Caco-2 (cell line): ENCODE measurements at regions of chr6 and their contacts with region 1.

Region 1: DNA sequence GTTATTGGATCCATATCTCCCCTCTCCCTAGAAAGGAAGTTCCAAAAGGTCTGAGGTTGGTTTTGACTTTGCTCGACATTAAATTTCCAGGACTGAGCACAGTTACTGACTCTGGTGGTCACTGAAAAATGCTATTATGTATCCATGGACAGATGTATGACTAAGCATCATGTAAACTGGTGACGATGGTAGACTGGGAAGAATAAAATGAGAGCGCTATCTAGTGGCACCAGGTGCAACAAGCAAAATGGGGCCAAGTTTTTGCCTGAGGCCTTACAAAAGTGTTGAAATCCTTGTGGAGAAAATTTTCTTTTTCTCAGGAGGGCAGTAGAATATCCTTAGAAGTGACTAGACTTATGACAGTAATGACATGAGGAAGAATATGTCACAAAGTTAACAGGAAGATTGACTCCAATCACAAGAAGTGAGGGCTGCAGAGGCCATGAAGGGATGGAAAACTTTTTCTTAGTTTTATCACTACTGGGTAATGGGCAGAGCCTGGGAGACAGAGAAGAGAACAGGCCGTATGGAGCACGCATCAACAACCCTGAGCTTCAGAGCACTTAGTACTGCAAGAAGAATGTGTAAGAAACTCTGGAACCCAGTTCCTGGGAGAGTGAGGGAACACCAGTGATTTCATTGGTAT is 88.9 kb upstream of the ELOVL5 start:
- DNase-seq: peak; percentile 43 to 64
- H3K4me3 ChIP-seq: no peak overlapping the region
- H3K4me3 Mint-ChIP-seq: no peak overlapping the region
- H3K27ac Mint-ChIP-seq: peak overlapping the region; percentile 30
- H3K4me1 ChIP-seq: 0 out of 2 replicates have a peak, but pooled peaks cover 10% of the 10 kb centered on the region
- H3K4me1 Mint-ChIP-seq: no peaks in the 10 kb centered on the region
- H3K27me3 ChIP-seq: no peaks in the 10 kb centered on the region
- H3K27me3 Mint-ChIP-seq: peaks cover 5% of the 10 kb centered on the region
- CTCF ChIP-seq: peak; percentile 30 to 68

Region 2: DNA sequence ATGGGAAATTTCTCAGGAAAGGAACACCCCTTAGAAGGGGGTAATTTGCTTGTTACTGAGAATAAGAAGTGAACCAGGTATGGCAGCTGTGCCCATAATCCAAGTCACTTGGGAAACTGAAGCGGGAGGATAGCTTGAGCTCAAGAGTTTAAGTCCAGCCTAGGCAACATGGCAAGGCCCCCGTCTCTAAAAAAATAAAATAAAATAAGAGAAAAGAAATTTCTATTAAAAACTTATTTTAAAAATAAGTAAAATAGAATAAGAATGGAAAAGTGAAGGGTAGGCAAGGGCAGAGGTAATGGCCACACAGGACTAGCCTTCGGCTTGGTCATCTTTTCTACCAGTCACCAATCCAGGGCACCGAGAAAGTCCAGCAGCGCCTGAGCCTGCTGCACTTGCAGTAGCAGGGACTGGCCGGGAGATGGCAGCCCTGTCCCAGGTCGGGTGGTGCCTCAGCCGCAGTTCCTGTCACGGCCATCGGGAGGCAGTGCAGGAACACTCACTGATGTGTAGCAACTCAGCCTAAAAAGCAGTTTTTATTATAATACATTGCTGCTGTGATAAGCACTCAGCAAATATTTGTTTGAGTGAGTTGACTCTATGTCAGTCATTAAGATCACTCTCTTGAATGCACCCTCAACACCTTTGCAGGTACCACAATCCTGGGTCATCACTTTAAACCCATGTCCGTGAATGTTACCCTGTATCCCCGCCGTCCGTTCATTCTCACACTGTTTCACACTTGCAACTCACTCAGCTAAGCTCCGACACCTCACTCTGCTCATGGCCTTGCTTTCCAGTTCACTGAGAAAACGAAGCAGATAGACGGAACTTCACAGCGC is 265.9 kb before region 1 on chr6:
- CTCF ChIA-PET with region 1: no interaction called
- POLR2A ChIA-PET with region 1: no interaction called
- intact Hi-C with region 1: loop called (anchors 1 kb)
- DNase-seq: peak; percentile 77 to 90
- H3K4me3 ChIP-seq: no peak overlapping the region
- H3K4me3 Mint-ChIP-seq: no peak overlapping the region
- H3K27ac Mint-ChIP-seq: no peak overlapping the region
- H3K4me1 ChIP-seq: peaks cover 6% of the 10 kb centered on the region; the same call in 1 of the 2 replicates
- H3K4me1 Mint-ChIP-seq: no peaks in the 10 kb centered on the region
- H3K27me3 ChIP-seq: no peaks in the 10 kb centered on the region
- H3K27me3 Mint-ChIP-seq: no peaks in the 10 kb centered on the region
- CTCF ChIP-seq: peak; percentile 100

Region 3: DNA sequence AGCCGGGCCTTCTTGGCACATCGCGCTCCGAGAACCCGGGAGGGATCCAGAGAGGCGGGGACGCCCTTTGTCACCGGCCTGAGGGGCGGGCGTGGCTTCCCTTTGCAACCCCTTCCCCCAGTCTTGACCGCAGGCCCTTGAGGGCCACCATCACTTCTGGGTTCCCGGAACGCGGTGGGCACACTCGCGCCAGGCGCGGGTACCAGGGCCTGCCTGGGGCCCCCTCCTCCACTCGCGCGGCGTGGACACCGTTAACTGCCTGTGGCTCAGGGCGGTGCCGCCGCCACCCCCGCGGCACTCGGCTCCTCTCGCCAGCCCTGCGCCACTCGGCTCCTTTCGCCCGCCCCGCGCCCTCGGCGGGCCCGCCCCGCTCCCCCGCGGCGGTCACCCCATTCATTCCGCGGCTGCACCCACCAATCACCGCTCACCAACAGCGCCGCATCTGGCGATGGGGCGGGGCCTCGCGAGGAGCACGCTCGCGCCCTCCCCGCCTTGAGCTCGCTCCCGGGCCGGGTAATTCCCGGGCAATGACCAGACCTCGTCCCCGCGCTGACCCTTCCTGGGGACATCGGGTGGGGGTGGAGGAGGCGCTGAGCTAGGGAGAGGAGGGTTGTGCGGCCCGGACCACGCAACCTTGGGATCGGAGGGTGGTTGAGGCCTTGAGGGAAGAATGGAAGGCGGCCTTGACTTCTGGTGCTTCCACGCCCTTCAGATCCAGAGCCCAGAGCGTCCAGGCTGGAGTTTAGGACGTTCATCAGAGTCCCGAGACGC is 78.4 kb before region 1 on chr6:
- CTCF ChIA-PET with region 1: no interaction called
- POLR2A ChIA-PET with region 1: interaction called, 3 read pairs
- intact Hi-C with region 1: loop called (anchors 5 kb)
- DNase-seq: peak; percentile 94 to 97
- H3K4me3 ChIP-seq: peak overlapping the region; percentile 59
- H3K4me3 Mint-ChIP-seq: peak overlapping the region; percentile 78
- H3K27ac Mint-ChIP-seq: peak overlapping the region; percentile 84
- H3K4me1 ChIP-seq: peaks cover 16% of the 10 kb centered on the region
- H3K4me1 Mint-ChIP-seq: peaks cover 15% of the 10 kb centered on the region
- H3K27me3 ChIP-seq: no peaks in the 10 kb centered on the region
- H3K27me3 Mint-ChIP-seq: peaks cover 3% of the 10 kb centered on the region
- CTCF ChIP-seq: no peak

Region 4: DNA sequence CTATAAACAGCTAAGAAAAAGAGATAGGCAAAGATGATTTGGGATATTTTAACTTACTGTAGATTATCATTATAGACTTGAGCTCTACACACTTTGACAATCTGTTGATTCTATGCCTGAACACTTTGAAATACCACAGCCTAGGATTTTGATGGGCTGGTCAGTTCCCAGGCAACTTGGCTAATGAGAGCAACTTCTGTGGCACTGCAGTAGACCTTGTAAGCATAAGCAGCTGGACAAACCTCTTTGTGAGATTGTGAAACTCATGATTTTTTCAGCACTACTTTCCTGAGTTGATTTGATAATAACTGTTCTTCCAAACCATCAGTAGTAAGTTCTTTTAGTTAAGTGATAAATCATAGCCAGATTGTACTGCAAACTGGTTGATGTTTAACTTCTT is 61.8 kb before region 1 on chr6:
- CTCF ChIA-PET with region 1: no interaction called
- POLR2A ChIA-PET with region 1: no interaction called
- intact Hi-C with region 1: no loop called
- DNase-seq: no peak
- H3K4me3 ChIP-seq: no peak overlapping the region
- H3K4me3 Mint-ChIP-seq: no peak overlapping the region
- H3K27ac Mint-ChIP-seq: no peak overlapping the region
- H3K4me1 ChIP-seq: no peaks in the 10 kb centered on the region
- H3K4me1 Mint-ChIP-seq: no peaks in the 10 kb centered on the region
- H3K27me3 ChIP-seq: no peaks in the 10 kb centered on the region; the same call in 1 of the 2 replicates
- H3K27me3 Mint-ChIP-seq: peaks cover 6% of the 10 kb centered on the region
- CTCF ChIP-seq: no peak

Region 5: GRCh38 chr6:53458105-53458866 is 20.6 kb after region 1 on chr6:
- CTCF ChIA-PET with region 1: no interaction called
- POLR2A ChIA-PET with region 1: no interaction called
- intact Hi-C with region 1: no loop called
- DNase-seq: no peak
- H3K4me3 ChIP-seq: no peak overlapping the region
- H3K4me3 Mint-ChIP-seq: no peak overlapping the region
- H3K27ac Mint-ChIP-seq: no peak overlapping the region
- H3K4me1 ChIP-seq: no peaks in the 10 kb centered on the region
- H3K4me1 Mint-ChIP-seq: peaks cover 6% of the 10 kb centered on the region
- H3K27me3 ChIP-seq: no peaks in the 10 kb centered on the region
- H3K27me3 Mint-ChIP-seq: peaks cover 10% of the 10 kb centered on the region
- CTCF ChIP-seq: no peak

Region 6: DNA sequence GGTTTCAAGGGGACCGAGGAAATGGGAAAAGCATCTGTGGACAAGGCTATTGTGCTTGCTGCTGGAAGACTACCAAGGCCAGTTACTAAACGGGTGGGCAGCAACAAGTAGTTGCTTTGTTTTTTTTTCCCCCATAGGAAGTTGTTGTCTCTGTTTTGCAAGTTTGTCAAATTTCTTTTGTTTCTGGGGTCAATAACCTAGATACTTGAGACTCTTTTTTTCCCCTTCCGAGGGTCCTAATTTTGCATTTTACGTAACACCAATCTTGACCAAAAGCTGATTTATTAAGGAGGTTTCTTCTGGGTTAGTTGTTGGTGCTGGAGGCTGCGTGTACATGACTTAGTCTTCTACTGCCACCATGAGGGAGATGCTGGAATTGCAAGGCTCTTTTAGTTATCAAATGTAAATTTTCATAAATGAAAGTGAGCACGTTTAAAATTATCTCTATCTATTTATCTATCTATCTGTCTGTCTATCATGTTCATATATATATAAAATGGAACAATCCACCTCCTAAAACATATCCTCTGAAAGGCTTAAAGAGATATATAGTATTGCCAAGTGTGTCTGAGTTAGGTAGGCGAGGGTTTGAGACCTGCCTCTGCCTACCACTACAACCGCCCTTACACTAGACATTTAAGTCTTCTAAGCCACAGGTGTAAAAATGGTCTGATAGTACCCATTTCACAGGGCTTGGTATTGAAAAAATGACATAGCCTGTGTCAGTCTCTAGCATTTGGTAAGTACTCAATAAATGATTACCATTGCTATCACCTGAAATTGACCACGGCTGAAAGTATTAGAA is 47.0 kb after region 1 on chr6:
- CTCF ChIA-PET with region 1: no interaction called
- POLR2A ChIA-PET with region 1: no interaction called
- intact Hi-C with region 1: loop called (anchors 2 kb)
- DNase-seq: peak; percentile 46 to 63
- H3K4me3 ChIP-seq: no peak overlapping the region
- H3K4me3 Mint-ChIP-seq: no peak overlapping the region
- H3K27ac Mint-ChIP-seq: no peak overlapping the region
- H3K4me1 ChIP-seq: peaks cover 8% of the 10 kb centered on the region; the same call in 1 of the 2 replicates
- H3K4me1 Mint-ChIP-seq: peaks cover 12% of the 10 kb centered on the region
- H3K27me3 ChIP-seq: no peaks in the 10 kb centered on the region; the same call in 1 of the 2 replicates
- H3K27me3 Mint-ChIP-seq: no peaks in the 10 kb centered on the region
- CTCF ChIP-seq: peak; percentile 88 to 89